ENCODE measurements at regions of chr12 and their contacts with region 1.

Region 1: DNA sequence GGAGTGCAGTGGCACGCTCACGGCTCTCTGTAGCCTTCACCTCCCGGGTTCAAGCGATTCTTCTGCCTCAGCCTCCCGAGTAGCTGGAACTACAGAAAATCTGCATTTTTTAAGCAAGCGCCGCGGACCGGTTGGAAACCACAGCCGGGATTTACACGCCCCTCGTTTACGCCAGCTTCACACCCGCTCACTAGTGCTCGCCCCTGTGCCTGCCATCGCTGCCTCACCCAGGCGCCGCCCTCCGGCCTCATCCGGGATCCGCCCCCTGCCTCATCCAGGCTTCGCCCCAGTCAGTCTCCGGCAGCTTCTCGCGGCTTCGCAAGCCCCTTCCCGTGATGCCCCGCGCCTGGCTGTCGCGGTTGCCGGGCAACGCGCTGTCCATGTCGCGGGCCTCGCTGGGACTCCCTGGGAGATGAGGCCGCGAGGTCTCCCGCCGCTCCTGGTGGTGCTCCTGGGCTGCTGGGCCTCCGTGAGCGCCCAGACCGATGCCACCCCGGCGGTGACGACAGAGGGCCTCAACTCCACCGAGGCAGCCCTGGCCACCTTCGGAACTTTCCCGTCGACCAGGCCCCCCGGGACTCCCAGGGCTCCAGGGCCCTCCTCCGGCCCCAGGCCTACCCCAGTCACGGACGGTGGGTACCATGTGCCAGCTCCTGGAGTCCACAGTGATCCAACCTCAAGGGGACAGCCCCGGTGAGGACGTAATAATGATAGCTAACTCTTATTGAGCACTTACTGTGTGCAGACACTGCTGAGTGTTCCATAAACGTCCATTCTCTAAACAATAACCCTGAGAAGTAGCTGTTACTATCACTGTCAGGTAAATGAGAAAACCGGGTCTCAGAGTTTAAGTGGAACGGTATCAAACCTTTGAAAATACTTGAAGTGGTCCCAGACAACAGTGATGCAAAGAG is at the start of gene TCTN1:
- DNase-seq: peak; percentile 88 to 98 (median 93)
- ATAC-seq: peak; percentile 100
- H3K4me3 ChIP-seq: peak within 1 kb of the TSS; percentile 75
- H3K4me3 Mint-ChIP-seq: peak within 1 kb of the TSS; percentile 81 to 89 (median 88)
- H3K27ac ChIP-seq: peak within 1 kb of the TSS; percentile 87
- H3K27ac Mint-ChIP-seq: peak within 1 kb of the TSS; percentile 31 to 92 (median 87)
- H3K4me1 ChIP-seq: peaks cover 4 to 6% of the 10 kb centered on the region in 2 donors
- H3K4me1 Mint-ChIP-seq: peaks cover 0 to 10% (median 4%) of the 10 kb centered on the region in 7 donors
- H3K27me3 ChIP-seq: no peaks in the 10 kb centered on the region
- H3K27me3 Mint-ChIP-seq: no peaks in the 10 kb centered on the region
- total RNA-seq, gene TCTN1: 5.2 to 13.0 (median 10.2) TPM

Region 2: DNA sequence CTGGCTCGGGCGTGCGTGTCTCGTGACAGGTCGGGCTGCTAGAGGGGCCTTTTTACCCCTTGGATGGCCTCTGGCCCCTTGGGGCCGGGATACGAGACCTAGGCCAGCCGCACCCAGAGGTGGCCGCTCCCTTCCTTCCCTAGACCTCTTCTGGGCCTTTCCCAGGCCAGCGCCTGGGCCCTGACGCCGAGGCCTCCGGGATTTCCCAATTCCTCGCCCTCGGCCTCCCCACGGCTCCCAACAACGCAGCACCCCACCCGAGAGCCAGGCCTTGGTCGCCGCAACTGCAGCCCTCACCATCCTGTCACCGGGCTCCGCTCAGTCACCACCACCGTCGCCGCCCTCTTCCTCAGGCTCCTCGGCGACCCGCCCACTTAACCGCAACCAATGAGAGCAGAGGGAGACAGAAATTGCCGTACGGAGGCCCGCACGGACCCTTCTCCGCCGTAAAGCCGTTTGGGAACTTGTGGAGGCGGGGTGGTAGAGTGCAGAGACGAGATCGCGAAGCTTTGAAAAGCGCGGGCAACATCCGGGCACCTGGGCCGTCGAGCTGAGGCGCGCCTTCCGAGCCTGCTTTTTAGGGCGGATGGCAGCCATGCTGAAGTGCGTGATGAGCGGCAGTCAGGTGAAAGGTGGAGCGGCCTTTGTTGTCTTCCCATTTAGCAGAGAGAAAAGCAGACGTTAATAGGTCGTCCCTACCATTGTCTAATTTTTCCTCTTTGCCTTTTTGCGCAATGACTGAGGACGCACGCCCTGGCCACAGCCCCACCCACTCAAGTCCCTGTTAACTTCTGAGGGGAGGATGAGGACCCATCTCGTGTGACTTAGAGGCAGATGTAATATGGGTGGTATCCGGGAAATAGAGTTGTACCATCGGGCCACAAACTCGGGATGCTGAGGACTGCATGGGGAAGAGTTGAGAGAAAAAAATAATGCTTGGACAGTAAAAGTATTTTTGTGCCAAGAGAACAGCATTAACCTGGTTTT is 112.0 kb before region 1 on chr12 and contains the starts of genes RAD9B and VPS29:
- CTCF ChIA-PET with region 1: no interaction called
- POLR2A ChIA-PET with region 1: interaction called, 11 read pairs
- intact Hi-C with region 1: loop called in 1 of 2 experiments (anchors 1 kb)
- DNase-seq: peak; percentile 91 to 100 (median 99)
- ATAC-seq: peak; percentile 98
- H3K4me3 ChIP-seq: peak within 1 kb of the TSS; percentile 86
- H3K4me3 Mint-ChIP-seq: peak within 1 kb of the TSS; percentile 88 to 100 (median 97)
- H3K27ac ChIP-seq: peak within 1 kb of the TSS; percentile 89
- H3K27ac Mint-ChIP-seq: peak within 1 kb of the TSS; percentile 93 to 100 (median 97)
- H3K4me1 ChIP-seq: peaks cover 20 to 22% of the 10 kb centered on the region in 2 donors
- H3K4me1 Mint-ChIP-seq: peaks cover 22 to 52% (median 39%) of the 10 kb centered on the region in 7 donors
- H3K27me3 ChIP-seq: no peaks in the 10 kb centered on the region
- H3K27me3 Mint-ChIP-seq: peaks cover 0 to 3% (median 0%) of the 10 kb centered on the region in 5 donors
- total RNA-seq, gene RAD9B: 0.60 to 2.9 (median 1.1) TPM
- total RNA-seq, gene VPS29: 78.5 to 131 (median 115) TPM

Region 3: DNA sequence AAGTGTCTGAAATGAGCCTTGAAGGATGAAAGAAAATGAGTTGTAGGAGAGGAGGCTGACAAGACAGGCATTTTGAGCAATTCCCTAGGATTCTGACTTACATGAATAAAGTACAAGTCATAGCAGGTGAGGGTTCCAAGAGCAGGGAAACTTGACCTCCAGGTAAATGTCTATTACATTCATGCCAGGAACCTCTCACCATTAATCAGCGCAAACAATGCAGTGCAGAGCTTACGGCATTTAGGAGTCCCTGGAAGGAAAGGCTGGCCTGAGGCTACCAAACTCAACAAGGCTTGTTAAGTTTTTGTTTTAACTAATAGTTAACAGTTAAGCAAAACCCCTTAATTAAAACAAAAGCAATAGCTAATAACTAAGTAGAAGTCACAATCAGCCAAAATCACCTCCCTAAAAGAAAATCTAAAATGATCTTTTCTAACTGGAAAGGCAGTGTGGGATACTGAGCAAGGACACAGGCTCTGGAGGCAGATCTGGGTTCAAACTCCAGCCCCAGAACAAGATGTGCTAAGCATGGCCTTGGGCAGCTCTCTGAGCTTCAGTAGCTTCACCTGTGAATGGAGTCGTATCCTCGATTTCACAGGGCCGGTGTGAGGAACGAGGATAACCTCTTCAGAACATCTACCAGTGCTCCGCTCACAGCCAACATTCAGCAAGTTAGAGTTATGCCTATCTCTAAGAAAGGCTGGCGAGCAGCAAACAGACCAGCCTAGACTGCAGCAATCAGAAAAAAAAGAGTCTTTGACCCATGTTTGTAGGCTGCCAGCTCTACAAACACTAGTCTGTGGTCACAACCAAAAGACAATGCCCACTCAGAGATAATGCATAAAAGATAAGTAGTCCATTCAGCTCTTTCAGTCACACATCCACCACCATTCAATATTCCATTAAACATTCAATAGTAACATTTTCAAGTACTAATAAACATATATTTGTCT is 47.8 kb before region 1 on chr12:
- CTCF ChIA-PET with region 1: no interaction called
- POLR2A ChIA-PET with region 1: no interaction called
- intact Hi-C with region 1: no loop called
- DNase-seq: no peak
- ATAC-seq: no peak
- H3K4me3 ChIP-seq: no peak overlapping the region
- H3K4me3 Mint-ChIP-seq: peak overlapping the region in 5 of 10 donors; percentile 10 to 62 (median 26)
- H3K27ac ChIP-seq: peak overlapping the region; percentile 26
- H3K27ac Mint-ChIP-seq: peak overlapping the region; percentile 9 to 96 (median 75)
- H3K4me1 ChIP-seq: peaks cover 8 to 44% of the 10 kb centered on the region in 2 donors
- H3K4me1 Mint-ChIP-seq: peaks cover 46 to 75% (median 58%) of the 10 kb centered on the region in 7 donors
- H3K27me3 ChIP-seq: no peaks in the 10 kb centered on the region
- H3K27me3 Mint-ChIP-seq: no peaks in the 10 kb centered on the region

Region 4: DNA sequence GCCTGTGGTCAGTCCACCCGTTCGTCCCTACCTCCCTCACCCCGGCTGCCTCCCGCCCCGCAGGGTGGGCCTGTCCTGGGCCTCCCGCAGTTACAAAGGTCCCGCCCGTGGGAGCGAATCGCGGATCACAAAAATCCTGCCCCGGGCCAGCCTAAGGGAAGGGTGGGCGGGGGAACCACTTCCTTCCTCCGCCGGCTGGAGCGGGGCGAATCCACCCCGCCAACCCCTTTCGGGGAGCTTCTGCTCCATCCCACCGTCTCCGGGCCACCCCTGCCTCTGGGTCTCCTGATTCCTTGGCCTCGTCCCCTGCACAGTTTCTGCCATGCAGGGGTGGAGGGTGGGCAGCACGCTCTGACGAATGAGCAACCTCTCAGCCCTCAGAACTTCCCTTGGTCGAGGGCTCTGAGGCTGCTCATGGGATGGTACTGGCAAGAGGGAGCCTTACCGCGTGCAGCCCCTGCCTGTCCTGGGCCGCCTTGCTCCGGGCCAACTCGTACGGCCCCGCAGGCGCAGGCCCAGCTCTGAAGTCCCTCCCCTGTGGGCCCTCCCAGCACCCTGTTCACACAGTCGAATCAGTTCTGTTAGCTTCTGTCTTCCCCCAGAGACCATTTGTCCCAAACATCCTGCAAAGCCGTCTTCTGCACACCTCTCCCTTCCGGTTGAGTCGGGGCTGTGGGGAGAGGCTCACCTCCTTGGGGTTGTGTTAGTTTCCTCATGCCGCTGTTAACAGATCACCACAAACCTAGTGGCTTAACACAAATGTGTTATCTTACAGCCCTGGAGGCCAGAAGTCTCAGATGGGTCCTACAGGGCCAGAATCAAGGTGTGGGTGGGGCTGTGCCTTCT is 75.5 kb after region 1 on chr12:
- CTCF ChIA-PET with region 1: no interaction called
- POLR2A ChIA-PET with region 1: interaction called, 6 read pairs
- intact Hi-C with region 1: loop called in 1 of 2 experiments (anchors 1 kb)
- DNase-seq: peak; percentile 20 to 62 (median 44)
- ATAC-seq: peak; percentile 69
- H3K4me3 ChIP-seq: peak overlapping the region; percentile 77
- H3K4me3 Mint-ChIP-seq: peak overlapping the region; percentile 84 to 98 (median 92)
- H3K27ac ChIP-seq: peak overlapping the region; percentile 66
- H3K27ac Mint-ChIP-seq: peak overlapping the region; percentile 65 to 96 (median 91)
- H3K4me1 ChIP-seq: peaks cover 13 to 14% of the 10 kb centered on the region in 2 donors
- H3K4me1 Mint-ChIP-seq: peaks cover 27 to 71% (median 55%) of the 10 kb centered on the region in 7 donors
- H3K27me3 ChIP-seq: no peaks in the 10 kb centered on the region
- H3K27me3 Mint-ChIP-seq: peaks cover 0 to 9% (median 0%) of the 10 kb centered on the region in 5 donors

Measured in naive thymus-derived CD4-positive, alpha-beta T cell (primary cell).